Caco-2 (cell line): ENCODE measurements at regions of chr11 and their contacts with region 1.

Region 1: DNA sequence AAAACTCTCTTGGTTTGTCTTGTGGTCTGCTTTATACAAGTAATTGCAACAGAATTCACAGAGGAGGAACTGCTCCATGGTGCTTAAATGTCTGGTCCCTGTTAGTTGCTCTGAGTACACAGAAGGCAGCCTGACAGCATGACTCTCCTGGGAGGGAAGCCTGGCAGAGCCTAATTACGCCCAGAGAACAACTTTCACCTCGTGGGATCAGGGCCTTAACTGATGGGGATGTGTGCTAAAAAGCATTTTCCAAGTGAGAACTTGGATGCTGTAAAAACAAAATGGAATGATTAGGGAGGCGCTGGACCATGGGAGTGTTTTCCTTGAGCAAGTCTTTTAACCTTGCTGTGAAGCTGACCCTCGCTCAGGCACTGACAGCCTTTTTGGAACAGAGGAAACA is 154.0 kb upstream of the TENM4 start:
- DNase-seq: no peak
- H3K4me3 ChIP-seq: no peak overlapping the region
- H3K4me3 Mint-ChIP-seq: no peak overlapping the region
- H3K27ac Mint-ChIP-seq: no peak overlapping the region
- H3K4me1 ChIP-seq: no peaks in the 10 kb centered on the region
- H3K4me1 Mint-ChIP-seq: no peaks in the 10 kb centered on the region
- H3K27me3 ChIP-seq: no peaks in the 10 kb centered on the region
- H3K27me3 Mint-ChIP-seq: peaks cover 5% of the 10 kb centered on the region
- CTCF ChIP-seq: no peak

Region 2: DNA sequence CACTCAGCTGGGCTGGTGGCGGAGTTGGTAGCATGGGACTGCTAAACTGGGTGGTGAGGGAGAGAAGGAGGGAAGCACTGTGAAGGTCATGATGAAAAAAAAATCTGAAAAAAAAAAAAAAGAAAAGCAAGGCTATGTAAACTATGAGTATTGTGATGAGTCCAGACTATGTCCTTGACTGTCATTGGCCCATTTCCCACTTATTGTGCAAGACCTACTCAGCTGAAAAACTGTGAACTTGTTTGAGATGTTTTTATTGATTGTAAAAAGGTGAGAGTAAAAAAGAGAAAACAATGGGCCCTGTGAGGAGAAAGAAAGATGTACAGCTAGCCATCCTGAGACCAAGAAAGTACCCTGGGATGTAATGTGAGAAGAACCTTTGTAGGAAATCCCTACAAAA is 644.4 kb after region 1 on chr11:
- CTCF ChIA-PET with region 1: interaction called, 10 read pairs
- POLR2A ChIA-PET with region 1: no interaction called
- intact Hi-C with region 1: no loop called
- DNase-seq: no peak
- H3K4me3 ChIP-seq: no peak overlapping the region
- H3K4me3 Mint-ChIP-seq: no peak overlapping the region
- H3K27ac Mint-ChIP-seq: no peak overlapping the region
- H3K4me1 ChIP-seq: no peaks in the 10 kb centered on the region
- H3K4me1 Mint-ChIP-seq: no peaks in the 10 kb centered on the region
- H3K27me3 ChIP-seq: no peaks in the 10 kb centered on the region
- H3K27me3 Mint-ChIP-seq: peaks cover 2% of the 10 kb centered on the region
- CTCF ChIP-seq: no peak